ENCODE measurements at regions of chr12 and their contacts with region 1.

Region 1: DNA sequence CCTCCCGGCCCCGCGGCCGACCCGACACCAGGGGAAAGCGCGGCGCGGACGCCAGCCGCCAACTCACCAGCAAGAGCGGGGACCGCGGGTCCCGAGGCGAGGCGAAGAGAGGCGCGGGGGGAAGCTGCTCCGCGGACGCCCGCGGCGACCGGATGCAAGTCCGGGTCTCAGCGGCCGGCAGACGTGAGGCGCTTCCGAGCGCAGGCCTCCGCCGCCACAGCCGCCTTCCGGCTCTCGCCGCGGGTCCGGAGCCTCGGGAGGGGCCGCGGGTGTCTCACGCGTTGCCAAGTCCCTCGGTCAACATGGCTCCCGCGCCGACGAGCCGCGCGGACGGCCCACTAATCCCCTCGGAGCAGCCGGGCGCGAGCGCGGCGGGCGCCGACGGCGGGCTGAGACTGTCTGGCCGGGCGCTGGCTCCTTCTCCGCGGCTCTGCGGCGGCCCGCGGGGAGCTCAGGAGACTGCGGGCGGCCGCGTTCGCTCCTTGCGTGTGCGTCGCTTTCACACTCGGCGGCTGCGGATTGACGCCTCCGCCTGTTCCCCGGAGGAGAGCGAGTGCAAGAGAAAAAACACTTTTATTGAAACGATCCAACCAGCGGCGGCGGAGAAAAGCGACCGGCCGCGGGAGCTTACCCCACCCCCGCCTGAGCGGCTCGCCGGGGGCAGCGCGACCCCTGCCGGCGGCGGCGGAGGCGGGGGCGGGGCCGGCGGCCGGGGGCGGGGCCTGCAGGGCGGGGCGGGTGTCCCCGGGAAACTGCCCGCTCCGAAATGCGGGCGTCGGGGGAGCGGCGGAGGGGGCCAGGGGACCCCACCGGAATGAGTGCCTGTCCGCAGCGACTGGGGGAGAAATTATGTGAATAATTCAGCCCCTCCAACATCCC is at the start of gene CDK17:
- DNase-seq: peak; percentile 71
- ATAC-seq: peak; percentile 78
- H3K4me3 ChIP-seq: peak within 1 kb of the TSS; percentile 83 to 89 (median 83)
- H3K27ac ChIP-seq: peak within 1 kb of the TSS; percentile 98
- H3K4me1 ChIP-seq: peaks cover 30% of the 10 kb centered on the region
- H3K27me3 ChIP-seq: peaks cover 0 to 3% of the 10 kb centered on the region in 2 experiments; a peak in 1 of 5 replicates
- CTCF ChIP-seq: peak; percentile 53
- EP300 ChIP-seq: no peak
- POLR2A ChIP-seq: peak; percentile 59 to 77
- RAD21 ChIP-seq: 0 out of 2 replicates have a peak, but pooled peaks have one; percentile 47
- total RNA-seq, gene CDK17: 20.1 and 22.3 TPM in 2 replicates

Region 2: DNA sequence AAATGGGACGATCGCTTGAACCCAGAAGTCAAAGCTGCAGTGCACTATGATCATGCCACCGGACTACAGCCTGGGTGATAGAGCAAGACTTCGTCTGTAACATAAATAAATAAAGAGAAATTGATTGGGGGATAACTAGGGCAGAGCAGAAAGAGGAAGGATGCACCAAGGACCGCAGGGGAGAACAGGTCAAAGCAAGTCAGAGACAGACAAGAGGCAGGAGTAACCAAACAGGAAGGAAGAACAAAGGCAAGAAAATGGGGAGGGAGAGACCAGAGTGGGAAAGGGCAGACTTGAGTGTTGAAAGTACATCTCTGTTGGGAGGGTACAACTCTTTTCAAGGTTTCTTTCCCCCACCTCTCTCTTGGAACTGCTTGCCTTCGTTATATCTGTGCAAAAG is 256.8 kb before region 1 on chr12:
- CTCF ChIA-PET with region 1: no interaction called
- POLR2A ChIA-PET with region 1: no interaction called
- in situ Hi-C with region 1: no loop called
- intact Hi-C with region 1: no loop called
- DNase-seq: no peak
- ATAC-seq: no peak
- H3K4me3 ChIP-seq: no peak overlapping the region
- H3K27ac ChIP-seq: no peak overlapping the region
- H3K4me1 ChIP-seq: no peaks in the 10 kb centered on the region
- H3K27me3 ChIP-seq: no peaks in the 10 kb centered on the region; a peak in 1 of 5 replicates
- CTCF ChIP-seq: no peak
- EP300 ChIP-seq: no peak
- POLR2A ChIP-seq: no peak
- RAD21 ChIP-seq: no peak

Region 3: DNA sequence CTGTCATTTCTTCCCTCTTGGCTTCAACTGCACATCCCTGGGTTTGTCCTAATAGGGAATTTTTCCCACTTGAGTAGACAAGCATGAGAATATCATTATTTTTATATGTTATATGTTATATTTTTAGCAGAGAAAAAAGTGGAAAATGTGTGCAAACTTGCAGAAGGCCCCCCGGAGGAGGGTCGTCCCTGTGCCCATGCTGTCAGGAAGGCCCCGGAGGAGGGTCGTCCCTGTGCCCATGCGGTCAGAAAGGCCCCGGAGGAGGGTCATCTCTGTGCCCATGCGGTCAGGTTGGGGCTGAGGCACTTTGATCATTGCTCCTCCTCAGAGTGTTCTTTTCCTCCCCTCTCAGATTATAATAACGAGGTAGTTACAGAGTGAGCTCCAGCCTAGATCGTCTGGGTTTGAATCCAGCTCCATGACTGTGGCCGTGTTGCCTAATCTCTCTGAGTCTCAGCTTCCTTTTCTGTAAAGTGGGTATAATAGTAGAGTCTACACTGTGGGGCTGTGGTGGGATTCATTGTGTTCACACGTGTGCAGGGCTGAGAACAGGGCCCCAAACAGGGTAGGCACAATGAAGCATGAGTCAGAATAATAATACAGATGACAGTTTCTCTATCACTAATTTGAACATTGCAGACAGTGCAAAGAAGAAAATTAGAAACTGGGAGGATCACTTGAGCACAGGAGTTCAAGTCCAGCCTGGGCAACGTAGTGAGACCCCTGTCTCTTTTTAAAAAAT is 172.6 kb before region 1 on chr12:
- CTCF ChIA-PET with region 1: no interaction called
- POLR2A ChIA-PET with region 1: interaction called, 4 read pairs
- in situ Hi-C with region 1: no loop called
- intact Hi-C with region 1: loop called (anchors 2 kb)
- DNase-seq: no peak
- ATAC-seq: no peak
- H3K4me3 ChIP-seq: no peak overlapping the region
- H3K27ac ChIP-seq: peak overlapping the region; percentile 39
- H3K4me1 ChIP-seq: peaks cover 35% of the 10 kb centered on the region
- H3K27me3 ChIP-seq: no peaks in the 10 kb centered on the region
- CTCF ChIP-seq: no peak
- EP300 ChIP-seq: no peak
- POLR2A ChIP-seq: no peak
- RAD21 ChIP-seq: no peak

Region 4: GRCh38 chr12:96335270-96335669 is 64.9 kb before region 1 on chr12:
- CTCF ChIA-PET with region 1: no interaction called
- POLR2A ChIA-PET with region 1: interaction called, 3 read pairs
- in situ Hi-C with region 1: no loop called
- intact Hi-C with region 1: loop called (anchors 5 kb)
- DNase-seq: no peak
- ATAC-seq: no peak
- H3K4me3 ChIP-seq: no peak overlapping the region
- H3K27ac ChIP-seq: no peak overlapping the region
- H3K4me1 ChIP-seq: peaks cover 55% of the 10 kb centered on the region
- H3K27me3 ChIP-seq: no peaks in the 10 kb centered on the region
- CTCF ChIP-seq: no peak
- EP300 ChIP-seq: no peak
- POLR2A ChIP-seq: no peak
- RAD21 ChIP-seq: no peak